GM12878 (cell line): ENCODE measurements at regions of chr16 and their contacts with region 1.

Region 1: DNA sequence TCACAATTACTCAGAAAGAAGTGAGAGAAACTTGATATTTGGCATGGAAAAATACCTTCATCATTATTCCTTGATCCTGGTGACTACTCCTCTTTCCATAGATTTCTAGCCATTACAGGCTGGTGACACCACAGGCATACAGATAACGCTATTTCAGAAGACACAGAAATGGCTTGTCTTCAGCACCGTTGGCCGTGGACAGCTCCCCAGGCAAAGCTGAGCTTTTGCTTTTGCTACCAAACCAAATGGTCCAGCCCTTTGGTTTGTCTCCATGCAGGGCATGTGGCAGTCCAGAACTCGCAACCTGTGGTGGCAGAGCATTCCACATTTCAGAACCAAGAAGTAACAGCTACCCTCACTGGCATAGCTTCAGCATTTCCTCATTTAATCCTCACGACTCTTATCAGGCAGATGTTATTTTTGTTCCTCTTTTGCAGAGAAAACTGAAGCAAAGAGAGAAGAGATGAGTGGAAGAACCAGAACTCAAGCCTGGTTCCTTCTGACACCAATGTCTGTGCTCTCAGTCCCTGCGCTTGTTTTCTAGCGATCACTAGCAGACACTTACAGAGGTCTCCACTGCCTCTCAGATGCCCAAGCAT is 55.5 kb downstream of the HS3ST4 start:
- DNase-seq: no peak
- ATAC-seq: no peak
- H3K4me3 ChIP-seq: no peak overlapping the region
- H3K27ac ChIP-seq: no peak overlapping the region
- H3K4me1 ChIP-seq: no peaks in the 10 kb centered on the region
- H3K27me3 ChIP-seq: no peaks in the 10 kb centered on the region
- CTCF ChIP-seq: no peak
- EP300 ChIP-seq: no peak
- POLR2A ChIP-seq: no peak
- RAD21 ChIP-seq: no peak

Region 2: GRCh38 chr16:25606069-25606468 is 141.2 kb before region 1 on chr16:
- CTCF ChIA-PET with region 1: no interaction called
- POLR2A ChIA-PET with region 1: no interaction called
- RAD21 ChIA-PET with region 1: no interaction called
- SMC1A ChIA-PET with region 1: no interaction called
- in situ Hi-C with region 1: no loop called
- intact Hi-C with region 1: no loop called
- DNase-seq: no peak
- ATAC-seq: no peak
- H3K4me3 ChIP-seq: no peak overlapping the region
- H3K27ac ChIP-seq: no peak overlapping the region
- H3K4me1 ChIP-seq: no peaks in the 10 kb centered on the region
- H3K27me3 ChIP-seq: no peaks in the 10 kb centered on the region
- CTCF ChIP-seq: no peak
- EP300 ChIP-seq: no peak
- POLR2A ChIP-seq: no peak
- RAD21 ChIP-seq: no peak

Region 3: GRCh38 chr16:25764466-25764865 is 17.2 kb after region 1 on chr16:
- CTCF ChIA-PET with region 1: no interaction called
- POLR2A ChIA-PET with region 1: no interaction called
- RAD21 ChIA-PET with region 1: no interaction called
- SMC1A ChIA-PET with region 1: no interaction called
- in situ Hi-C with region 1: no loop called
- intact Hi-C with region 1: no loop called
- DNase-seq: no peak
- ATAC-seq: no peak
- H3K4me3 ChIP-seq: no peak overlapping the region
- H3K27ac ChIP-seq: no peak overlapping the region
- H3K4me1 ChIP-seq: no peaks in the 10 kb centered on the region
- H3K27me3 ChIP-seq: no peaks in the 10 kb centered on the region; a peak in 1 of 4 replicates
- CTCF ChIP-seq: no peak
- EP300 ChIP-seq: no peak
- POLR2A ChIP-seq: no peak
- RAD21 ChIP-seq: no peak

Region 4: DNA sequence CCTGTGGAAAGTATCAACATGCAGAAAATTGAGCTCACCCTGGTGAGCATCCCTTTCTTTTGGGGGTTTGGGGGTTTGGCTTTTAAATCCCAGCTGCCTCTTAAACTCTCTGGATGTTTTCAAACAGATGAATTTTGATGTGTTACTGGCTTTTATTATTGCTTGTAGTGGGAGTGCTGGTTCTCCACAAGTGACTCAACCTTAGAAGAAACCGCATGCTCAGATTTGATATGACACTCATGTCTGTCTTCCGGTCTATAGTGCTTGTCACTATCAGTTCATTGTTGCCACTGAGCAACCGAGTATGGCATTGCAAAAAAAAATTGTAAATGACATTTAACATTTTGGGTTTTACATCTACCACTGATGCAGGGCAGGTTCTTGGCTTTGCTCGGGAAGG is 49.0 kb after region 1 on chr16:
- CTCF ChIA-PET with region 1: no interaction called
- POLR2A ChIA-PET with region 1: no interaction called
- RAD21 ChIA-PET with region 1: no interaction called
- SMC1A ChIA-PET with region 1: no interaction called
- in situ Hi-C with region 1: no loop called
- intact Hi-C with region 1: loop called (anchors 5 kb)
- DNase-seq: no peak
- ATAC-seq: no peak
- H3K4me3 ChIP-seq: no peak overlapping the region
- H3K27ac ChIP-seq: no peak overlapping the region
- H3K4me1 ChIP-seq: no peaks in the 10 kb centered on the region
- H3K27me3 ChIP-seq: no peaks in the 10 kb centered on the region
- CTCF ChIP-seq: no peak
- EP300 ChIP-seq: no peak
- POLR2A ChIP-seq: no peak
- RAD21 ChIP-seq: no peak